OCI-LY7 (cell line): ENCODE measurements at regions of chr14 and their contacts with region 1.

Region 1: GRCh38 chr14:22531451-22532344 is 57.3 kb downstream of the DAD1 start:
- DNase-seq: peak; percentile 79
- H3K4me3 ChIP-seq: peak overlapping the region; percentile 70
- H3K27ac ChIP-seq: peak overlapping the region; percentile 88
- H3K4me1 ChIP-seq: peaks cover 84% of the 10 kb centered on the region
- CTCF ChIP-seq: no peak

Region 2: DNA sequence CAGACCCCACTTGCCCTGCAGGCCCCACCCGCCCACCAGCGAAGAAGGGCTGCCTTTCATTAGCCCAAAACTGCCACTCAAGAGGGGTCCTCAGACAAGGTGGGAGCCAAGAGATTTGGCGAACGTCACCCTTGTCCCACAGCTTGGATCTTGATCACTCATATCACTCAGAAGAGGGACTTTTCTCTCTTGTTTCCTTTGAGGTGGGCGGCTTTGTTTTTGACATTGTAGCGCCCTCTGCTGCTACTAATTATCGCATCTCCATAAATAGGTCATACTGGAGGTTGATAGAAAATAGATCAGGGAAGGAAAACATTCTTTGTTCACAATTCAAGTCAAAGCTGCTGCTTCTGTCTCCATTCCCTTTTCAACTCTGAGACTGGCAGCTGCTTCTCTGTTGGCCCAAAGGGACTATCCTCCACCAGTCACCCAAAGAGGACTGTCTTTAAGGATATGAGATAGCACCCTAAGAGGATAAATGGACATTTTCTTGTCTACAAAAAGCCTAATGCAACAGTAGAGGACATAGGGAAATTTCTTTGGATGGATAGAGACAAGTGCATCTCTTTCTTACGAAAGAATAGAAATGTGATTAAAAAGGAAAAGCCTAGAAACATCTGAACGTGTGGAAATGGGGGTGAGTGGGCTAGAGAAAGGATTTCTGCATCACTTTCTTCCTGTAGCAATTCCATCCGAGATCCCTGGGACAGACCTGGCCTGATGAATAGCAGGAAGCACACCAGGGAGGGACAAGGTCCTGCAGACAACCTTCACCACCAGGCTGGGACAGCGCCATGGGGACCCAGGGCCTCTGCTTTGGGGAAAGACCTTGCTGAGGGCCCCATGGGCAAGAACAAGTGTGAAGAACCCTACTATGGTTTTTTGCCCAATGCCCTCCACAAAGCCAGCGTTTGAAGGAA is 58.5 kb before region 1 on chr14:
- CTCF ChIA-PET with region 1: no interaction called
- POLR2A ChIA-PET with region 1: interaction called, 21 read pairs
- intact Hi-C with region 1: loop called (anchors 2 kb)
- DNase-seq: peak; percentile 89
- H3K4me3 ChIP-seq: peak overlapping the region; percentile 37
- H3K27ac ChIP-seq: peak overlapping the region; percentile 81
- H3K4me1 ChIP-seq: peaks cover 98% of the 10 kb centered on the region
- CTCF ChIP-seq: peak; percentile 96

Region 3: DNA sequence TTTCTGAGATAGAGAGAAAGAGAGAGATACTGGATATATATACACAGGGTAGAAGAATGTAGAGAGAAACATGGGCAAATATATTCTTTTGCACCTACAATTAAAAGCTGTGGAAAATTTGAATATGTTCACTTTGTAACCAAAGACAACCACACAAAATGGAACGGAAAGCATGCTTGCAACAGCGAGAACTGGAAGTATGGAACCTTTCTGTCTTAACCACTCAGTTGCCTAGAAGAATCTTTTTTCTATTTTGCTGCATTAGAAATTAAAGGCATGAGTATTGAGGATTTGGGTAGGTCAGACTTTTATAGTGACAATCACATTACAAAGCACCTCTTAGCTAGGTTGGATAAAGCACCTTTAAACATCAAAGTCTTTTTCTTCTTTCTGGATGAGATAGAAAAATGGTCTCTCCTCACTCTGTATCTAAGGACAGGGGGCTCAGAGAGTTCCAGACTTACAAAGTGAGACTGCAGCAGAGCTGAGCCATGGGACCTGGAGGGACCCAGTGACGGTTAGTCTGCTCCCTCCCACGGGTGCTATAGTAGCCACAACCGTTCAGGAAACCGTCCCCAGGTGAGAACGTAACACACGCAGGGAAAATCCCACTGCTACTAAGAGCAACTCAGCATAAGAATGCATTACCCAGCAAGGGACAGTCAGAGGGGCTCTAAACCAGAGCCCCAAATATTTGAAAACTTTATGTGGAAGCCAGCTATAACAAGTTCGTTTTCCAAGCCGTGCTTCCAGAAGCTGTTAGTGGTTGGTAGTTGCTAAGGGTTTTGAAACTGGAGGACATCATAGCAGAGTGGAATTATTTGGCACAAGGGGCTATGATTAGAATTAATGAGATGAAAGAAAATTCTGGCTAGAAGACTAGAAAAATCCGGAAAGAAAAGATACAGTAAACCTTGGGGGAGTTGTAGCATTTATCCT is 39.7 kb before region 1 on chr14:
- CTCF ChIA-PET with region 1: interaction called, 5 read pairs
- POLR2A ChIA-PET with region 1: interaction called, 14 read pairs
- intact Hi-C with region 1: no loop called
- DNase-seq: no peak
- H3K4me3 ChIP-seq: peak overlapping the region; percentile 46
- H3K27ac ChIP-seq: peak overlapping the region; percentile 51
- H3K4me1 ChIP-seq: peaks cover 98% of the 10 kb centered on the region
- CTCF ChIP-seq: no peak

Region 4: GRCh38 chr14:22519877-22520685 is 11.6 kb before region 1 on chr14:
- CTCF ChIA-PET with region 1: interaction called, 5 read pairs
- POLR2A ChIA-PET with region 1: interaction called, 101 read pairs
- intact Hi-C with region 1: no loop called
- DNase-seq: no peak
- H3K4me3 ChIP-seq: peak overlapping the region; percentile 23
- H3K27ac ChIP-seq: peak overlapping the region; percentile 49
- H3K4me1 ChIP-seq: peaks cover 100% of the 10 kb centered on the region
- CTCF ChIP-seq: no peak